Activated naive CD4-positive, alpha-beta T cell treated with anti-CD3 and anti-CD28 coated beads, Interleukin-2, amount 10 ng/mL, durations not matched to agents 7 days and 5 days (primary cell): ENCODE measurements at regions of chr11 and their contacts with region 1.

Region 1: DNA sequence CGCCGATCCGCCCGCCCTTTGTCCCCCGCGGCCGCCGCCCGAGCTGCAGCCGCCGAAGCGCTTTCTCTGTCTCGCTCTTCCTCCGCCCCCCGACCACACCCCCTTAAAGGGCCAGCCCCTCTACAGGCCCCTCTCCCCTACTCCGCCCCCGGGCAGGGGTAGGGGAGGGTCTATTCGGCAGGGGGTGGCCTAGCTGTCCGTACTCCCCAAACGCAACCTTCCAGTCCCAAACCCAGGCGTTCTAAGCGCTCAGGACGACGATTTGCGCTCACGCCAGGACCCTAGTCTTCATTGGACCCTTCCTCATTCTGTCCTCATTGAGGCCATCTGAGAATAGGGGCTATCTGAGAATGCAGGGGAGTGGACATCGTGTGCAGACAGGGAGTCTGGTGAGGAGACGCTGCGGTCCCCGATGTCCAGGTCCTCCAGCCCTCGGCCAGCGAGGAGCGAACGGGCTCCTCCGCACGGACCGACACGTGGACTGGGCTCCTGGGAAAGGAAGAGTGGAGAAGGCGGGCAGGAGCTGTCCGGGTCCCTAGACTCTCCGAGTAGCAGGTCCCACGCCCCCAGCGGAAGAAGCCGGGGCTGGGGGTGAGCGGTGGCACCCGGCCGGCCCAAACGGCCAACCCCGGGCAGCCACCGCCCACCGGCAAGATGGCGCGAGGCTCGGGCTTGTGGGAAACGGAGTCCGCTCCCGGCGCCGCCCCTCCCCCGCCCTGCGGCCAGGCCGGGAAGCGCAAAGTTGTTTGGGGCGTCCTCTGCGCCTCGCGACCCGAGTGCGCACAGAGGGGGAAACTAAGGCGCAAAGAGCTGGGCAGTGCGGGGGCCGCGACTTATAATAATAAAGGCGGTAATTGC is at the start of gene PPP1R14B:
- DNase-seq: peak; percentile 89
- H3K4me3 Mint-ChIP-seq: peak within 1 kb of the TSS; percentile 92
- H3K27ac Mint-ChIP-seq: peak within 1 kb of the TSS; percentile 87
- H3K4me1 Mint-ChIP-seq: peaks cover 56% of the 10 kb centered on the region
- H3K27me3 Mint-ChIP-seq: peaks cover 15% of the 10 kb centered on the region

Region 2: DNA sequence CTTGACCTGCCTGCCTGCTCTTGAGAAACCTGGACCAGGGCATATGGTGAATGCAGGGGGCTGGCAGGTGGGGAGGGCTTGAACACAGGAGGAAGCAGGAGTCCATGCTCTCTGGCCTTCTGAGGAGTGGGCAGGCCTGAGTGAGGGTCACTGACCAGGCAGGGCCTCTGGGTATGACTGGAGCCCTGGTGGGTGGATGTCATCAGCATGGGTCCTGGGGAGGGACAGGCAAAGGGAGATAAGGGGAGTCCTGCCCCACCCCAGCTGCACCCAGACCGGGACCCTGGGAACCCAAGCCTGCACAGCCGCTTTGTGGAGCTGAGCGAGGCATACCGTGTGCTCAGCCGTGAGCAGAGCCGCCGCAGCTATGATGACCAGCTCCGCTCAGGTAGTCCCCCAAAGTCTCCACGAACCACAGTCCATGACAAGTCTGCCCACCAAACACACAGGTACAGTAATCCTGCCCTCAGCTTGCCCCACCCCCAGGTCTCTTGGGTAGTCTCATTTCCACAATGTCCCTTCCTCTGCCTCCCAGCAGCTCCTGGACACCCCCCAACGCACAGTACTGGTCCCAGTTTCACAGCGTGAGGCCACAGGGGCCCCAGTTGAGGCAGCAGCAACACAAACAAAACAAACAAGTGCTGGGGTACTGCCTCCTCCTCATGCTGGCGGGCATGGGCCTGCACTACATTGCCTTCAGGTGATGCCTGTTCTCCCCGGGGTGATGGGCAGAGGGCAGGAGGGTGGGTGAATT is 14.8 kb before region 1 on chr11:
- CTCF ChIA-PET with region 1: no interaction called
- DNase-seq: no peak
- H3K4me3 Mint-ChIP-seq: peak overlapping the region; percentile 87
- H3K27ac Mint-ChIP-seq: peak overlapping the region; percentile 62
- H3K4me1 Mint-ChIP-seq: peaks cover 67% of the 10 kb centered on the region
- H3K27me3 Mint-ChIP-seq: no peaks in the 10 kb centered on the region

Region 3: GRCh38 chr11:64263021-64263946 is 16.2 kb after region 1 on chr11:
- CTCF ChIA-PET with region 1: interaction called, 11 read pairs
- DNase-seq: no peak
- H3K4me3 Mint-ChIP-seq: no peak overlapping the region
- H3K27ac Mint-ChIP-seq: no peak overlapping the region
- H3K4me1 Mint-ChIP-seq: peaks cover 14% of the 10 kb centered on the region
- H3K27me3 Mint-ChIP-seq: no peaks in the 10 kb centered on the region